ENCODE measurements at regions of chr13 and their contacts with region 1.

Region 1: DNA sequence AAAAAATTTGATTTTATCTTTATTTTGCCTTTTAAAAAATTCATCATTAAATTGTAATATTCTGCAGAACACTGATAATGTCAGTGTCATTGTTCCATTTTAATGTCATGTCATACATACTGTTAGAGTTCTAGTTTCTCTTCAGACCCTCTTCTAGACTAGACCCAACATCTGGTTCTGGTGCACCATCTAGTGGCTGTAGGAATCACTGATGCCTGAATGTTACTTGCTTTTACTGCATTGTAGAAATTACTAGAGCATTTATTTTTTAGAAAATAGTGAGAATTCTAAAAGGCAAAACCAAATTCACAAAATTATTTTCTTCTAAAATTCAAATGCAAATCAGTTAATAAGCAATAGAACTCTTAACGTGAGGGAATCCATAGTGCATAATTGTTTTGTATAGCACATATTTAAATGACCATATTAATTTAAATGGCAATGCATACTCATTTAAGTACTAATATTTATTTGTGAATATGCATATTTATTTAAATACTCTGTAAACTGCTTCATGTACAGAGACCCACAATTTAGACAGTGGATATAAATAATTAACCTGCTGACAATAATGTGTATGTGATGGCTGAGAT is 425.7 kb downstream of the KLF12 start:
- DNase-seq: peak; percentile 71
- ATAC-seq: peak; percentile 89
- H3K4me3 ChIP-seq: no peak overlapping the region
- H3K27ac ChIP-seq: no peak overlapping the region
- H3K4me1 ChIP-seq: no peaks in the 10 kb centered on the region
- H3K27me3 ChIP-seq: no peaks in the 10 kb centered on the region
- CTCF ChIP-seq: peak; percentile 83
- POLR2A ChIP-seq: no peak
- RAD21 ChIP-seq: peak; percentile 88

Region 2: GRCh38 chr13:72808917-72809500 is 899.5 kb before region 1 on chr13:
- CTCF ChIA-PET with region 1: no interaction called
- POLR2A ChIA-PET with region 1: no interaction called
- dilution Hi-C with region 1: no loop called
- in situ Hi-C with region 1: loop called (anchors 25 kb)
- intact Hi-C with region 1: loop called (anchors 2 kb)
- DNase-seq: peak; percentile 6
- ATAC-seq: no peak
- H3K4me3 ChIP-seq: no peak overlapping the region
- H3K27ac ChIP-seq: no peak overlapping the region
- H3K4me1 ChIP-seq: no peaks in the 10 kb centered on the region
- H3K27me3 ChIP-seq: no peaks in the 10 kb centered on the region
- CTCF ChIP-seq: peak; percentile 44
- POLR2A ChIP-seq: no peak
- RAD21 ChIP-seq: peak; percentile 28

Region 3: GRCh38 chr13:72839831-72840426 is 868.6 kb before region 1 on chr13:
- CTCF ChIA-PET with region 1: no interaction called
- POLR2A ChIA-PET with region 1: no interaction called
- dilution Hi-C with region 1: no loop called
- in situ Hi-C with region 1: no loop called
- intact Hi-C with region 1: loop called (anchors 1 kb)
- DNase-seq: peak; percentile 42
- ATAC-seq: peak; percentile 87
- H3K4me3 ChIP-seq: no peak overlapping the region
- H3K27ac ChIP-seq: no peak overlapping the region
- H3K4me1 ChIP-seq: no peaks in the 10 kb centered on the region
- H3K27me3 ChIP-seq: no peaks in the 10 kb centered on the region
- CTCF ChIP-seq: peak; percentile 59
- POLR2A ChIP-seq: no peak
- RAD21 ChIP-seq: peak; percentile 79

Region 4: GRCh38 chr13:73058736-73059459 is 649.6 kb before region 1 on chr13 and contains the start of gene KLF5:
- CTCF ChIA-PET with region 1: no interaction called
- POLR2A ChIA-PET with region 1: no interaction called
- dilution Hi-C with region 1: no loop called
- in situ Hi-C with region 1: no loop called
- intact Hi-C with region 1: loop called (anchors 1 kb)
- DNase-seq: peak; percentile 89
- ATAC-seq: peak; percentile 96
- H3K4me3 ChIP-seq: peak within 1 kb of the TSS; percentile 91
- H3K27ac ChIP-seq: peak within 1 kb of the TSS; percentile 70
- H3K4me1 ChIP-seq: peaks cover 5% of the 10 kb centered on the region
- H3K27me3 ChIP-seq: no peaks in the 10 kb centered on the region
- CTCF ChIP-seq: no peak; the same call in 1 of the 2 replicates
- POLR2A ChIP-seq: peak; percentile 80
- RAD21 ChIP-seq: no peak
- total RNA-seq, gene KLF5: 4.4 and 5.4 TPM in 2 replicates

Region 5: DNA sequence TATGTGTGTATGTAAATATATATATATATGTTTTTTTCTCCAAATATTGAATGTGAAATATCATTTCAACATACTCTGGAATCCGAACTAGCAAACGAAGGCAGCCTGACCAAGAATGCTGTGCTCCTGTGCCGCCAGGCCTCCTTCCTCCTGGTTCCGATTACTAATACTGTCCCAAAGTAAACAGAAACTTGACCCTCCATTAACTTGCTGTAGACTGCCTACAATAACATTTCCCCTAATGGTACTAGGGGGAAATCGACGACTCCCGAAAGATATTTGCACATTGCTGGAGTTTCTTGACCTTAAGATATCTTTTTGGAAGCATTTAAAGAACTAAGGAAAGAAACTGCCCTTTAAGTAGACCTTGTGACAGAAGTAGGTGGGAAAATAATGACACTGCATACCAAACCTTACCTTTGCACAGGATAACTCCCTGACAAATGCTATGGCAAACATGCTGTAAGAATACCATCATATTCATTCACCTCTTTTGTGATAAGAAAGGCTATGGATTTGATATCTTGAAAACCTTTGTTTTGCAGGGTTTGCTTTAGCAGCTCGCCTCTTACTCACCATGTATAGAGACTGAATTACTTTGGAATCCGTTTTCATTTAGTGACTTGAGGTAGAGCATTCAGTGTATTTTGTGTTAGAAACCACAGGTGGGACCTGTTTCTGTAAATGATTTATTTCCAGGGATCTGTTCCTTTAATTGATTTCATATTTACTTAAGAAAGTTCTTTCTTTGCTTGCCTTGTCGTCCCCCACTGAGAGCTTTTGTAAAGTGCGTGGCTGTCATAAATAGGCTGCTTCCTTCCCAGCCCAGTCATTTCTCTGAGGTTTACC is 569.6 kb before region 1 on chr13:
- CTCF ChIA-PET with region 1: no interaction called
- POLR2A ChIA-PET with region 1: no interaction called
- dilution Hi-C with region 1: no loop called
- in situ Hi-C with region 1: no loop called
- intact Hi-C with region 1: loop called (anchors 5 kb)
- DNase-seq: peak; percentile 76
- ATAC-seq: peak; percentile 91
- H3K4me3 ChIP-seq: no peak overlapping the region
- H3K27ac ChIP-seq: peak overlapping the region; percentile 70; the same call in 1 of the 2 replicates
- H3K4me1 ChIP-seq: peaks cover 14% of the 10 kb centered on the region
- H3K27me3 ChIP-seq: no peaks in the 10 kb centered on the region
- CTCF ChIP-seq: no peak
- POLR2A ChIP-seq: no peak
- RAD21 ChIP-seq: no peak

Region 6: GRCh38 chr13:73223372-73223781 is 485.1 kb before region 1 on chr13:
- CTCF ChIA-PET with region 1: no interaction called
- POLR2A ChIA-PET with region 1: no interaction called
- dilution Hi-C with region 1: no loop called
- in situ Hi-C with region 1: no loop called
- intact Hi-C with region 1: loop called (anchors 10 kb)
- DNase-seq: no peak
- ATAC-seq: no peak
- H3K4me3 ChIP-seq: no peak overlapping the region
- H3K27ac ChIP-seq: no peak overlapping the region
- H3K4me1 ChIP-seq: no peaks in the 10 kb centered on the region; the same call in 1 of the 2 replicates
- H3K27me3 ChIP-seq: no peaks in the 10 kb centered on the region
- CTCF ChIP-seq: no peak
- POLR2A ChIP-seq: no peak
- RAD21 ChIP-seq: no peak

Region 7: DNA sequence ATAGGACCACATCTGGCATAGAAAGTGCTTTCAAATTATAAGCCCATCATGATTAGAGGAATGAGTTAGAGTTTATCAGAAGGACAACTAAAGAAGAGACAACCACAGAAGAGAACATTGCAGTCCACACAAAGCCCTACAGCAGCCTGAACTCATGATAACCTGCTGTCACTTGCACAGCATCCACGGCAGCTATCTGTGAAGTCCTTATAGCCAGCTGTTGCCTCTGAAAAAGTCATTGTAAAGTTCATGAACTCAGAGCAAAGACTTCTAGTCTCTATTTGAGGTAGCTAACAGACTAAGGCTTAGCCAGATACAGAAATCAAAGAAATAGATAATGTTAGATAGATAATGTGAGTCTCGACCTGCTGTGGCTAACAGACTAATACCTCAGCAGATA is 199.6 kb before region 1 on chr13:
- CTCF ChIA-PET with region 1: no interaction called
- POLR2A ChIA-PET with region 1: no interaction called
- dilution Hi-C with region 1: no loop called
- in situ Hi-C with region 1: no loop called
- intact Hi-C with region 1: no loop called
- DNase-seq: no peak
- ATAC-seq: no peak
- H3K4me3 ChIP-seq: no peak overlapping the region
- H3K27ac ChIP-seq: no peak overlapping the region
- H3K4me1 ChIP-seq: no peaks in the 10 kb centered on the region
- H3K27me3 ChIP-seq: no peaks in the 10 kb centered on the region
- CTCF ChIP-seq: no peak
- POLR2A ChIP-seq: no peak
- RAD21 ChIP-seq: no peak

Region 8: GRCh38 chr13:73521290-73521624 is 187.2 kb before region 1 on chr13:
- CTCF ChIA-PET with region 1: no interaction called
- POLR2A ChIA-PET with region 1: no interaction called
- dilution Hi-C with region 1: no loop called
- in situ Hi-C with region 1: no loop called
- intact Hi-C with region 1: no loop called
- DNase-seq: no peak
- ATAC-seq: no peak
- H3K4me3 ChIP-seq: no peak overlapping the region
- H3K27ac ChIP-seq: no peak overlapping the region
- H3K4me1 ChIP-seq: no peaks in the 10 kb centered on the region
- H3K27me3 ChIP-seq: peaks cover 2% of the 10 kb centered on the region
- CTCF ChIP-seq: no peak
- POLR2A ChIP-seq: no peak
- RAD21 ChIP-seq: no peak

Region 9: DNA sequence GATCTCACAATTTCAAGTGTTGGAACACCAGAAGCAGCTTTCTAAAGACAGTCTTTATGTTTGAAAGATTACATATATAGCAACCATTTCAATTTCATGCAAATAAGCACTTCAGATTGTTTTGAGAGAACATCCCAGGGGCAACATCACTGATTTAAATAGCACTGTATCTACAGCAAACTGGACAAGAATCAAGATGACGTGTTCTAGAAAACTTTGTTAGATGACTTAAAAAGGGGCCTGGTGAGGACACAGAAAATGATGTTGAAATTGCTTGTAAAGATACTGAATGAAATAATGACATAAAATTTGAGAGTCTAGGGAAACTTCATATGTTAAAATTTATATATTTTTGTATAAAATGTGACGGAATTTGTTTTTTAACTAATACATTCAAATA is 148.6 kb after region 1 on chr13:
- CTCF ChIA-PET with region 1: no interaction called
- POLR2A ChIA-PET with region 1: no interaction called
- dilution Hi-C with region 1: no loop called
- in situ Hi-C with region 1: no loop called
- intact Hi-C with region 1: no loop called
- DNase-seq: no peak
- ATAC-seq: no peak
- H3K4me3 ChIP-seq: no peak overlapping the region
- H3K27ac ChIP-seq: no peak overlapping the region
- H3K4me1 ChIP-seq: no peaks in the 10 kb centered on the region
- H3K27me3 ChIP-seq: no peaks in the 10 kb centered on the region
- CTCF ChIP-seq: no peak
- POLR2A ChIP-seq: no peak
- RAD21 ChIP-seq: no peak

Measured in IMR-90 (cell line).